ENCODE measurements at regions of chr6 and their contacts with region 1.

Region 1: DNA sequence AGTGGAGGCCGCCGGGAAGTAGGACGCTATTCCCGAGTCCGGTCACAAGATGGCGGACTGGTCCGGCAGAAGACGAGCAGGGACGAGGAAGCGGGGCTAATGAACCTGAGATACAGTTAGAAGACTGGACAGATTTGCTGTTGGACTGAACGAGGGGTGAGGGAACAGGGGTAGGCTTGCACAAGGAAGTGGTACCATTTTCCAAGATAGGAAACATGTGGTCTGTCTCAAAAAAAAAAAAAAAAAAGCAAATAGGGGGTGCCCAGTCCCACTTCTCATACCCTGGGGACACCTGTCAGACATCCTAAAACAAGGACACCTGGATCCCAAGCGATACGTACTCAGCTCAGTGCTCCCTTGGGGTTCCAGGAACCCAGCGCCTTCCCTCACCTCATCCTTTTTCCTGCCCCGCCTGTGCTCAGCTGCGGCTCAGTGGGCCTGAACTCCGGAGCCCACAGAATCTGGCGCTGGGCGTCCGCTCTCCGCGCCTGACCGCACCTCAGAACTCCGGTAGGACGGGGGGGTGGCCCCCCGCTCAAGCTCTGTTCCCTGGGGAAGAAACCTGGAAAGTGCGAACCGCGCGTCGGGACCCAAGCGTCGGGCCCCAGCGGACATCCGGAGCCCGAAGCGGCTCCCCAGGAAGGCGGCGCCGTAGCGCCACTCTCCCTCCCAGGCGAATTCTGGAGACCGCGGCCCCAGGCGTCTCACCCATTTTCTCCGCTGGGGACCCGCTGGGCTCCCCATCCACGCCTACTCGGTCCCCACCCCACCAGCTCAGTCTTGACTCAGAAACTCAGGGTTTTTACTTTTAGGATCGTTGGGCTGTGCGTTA is at the start of gene LY6G5C:
- DNase-seq: peak; percentile 77 to 87 (median 83)
- H3K4me3 ChIP-seq: peak within 1 kb of the TSS; percentile 48
- H3K27ac ChIP-seq: peak within 1 kb of the TSS; percentile 71 to 73
- H3K4me1 ChIP-seq: peaks cover 3% of the 10 kb centered on the region
- H3K27me3 ChIP-seq: no peaks in the 10 kb centered on the region
- CTCF ChIP-seq: peak in 2 of 3 donors; percentile 72 to 79
- EP300 ChIP-seq: no peak
- POLR2A ChIP-seq: no peak
- total RNA-seq, gene LY6G5C: 1.2 to 2.3 (median 2.0) TPM in 6 of 7 donors, not detected in the other

Region 2: DNA sequence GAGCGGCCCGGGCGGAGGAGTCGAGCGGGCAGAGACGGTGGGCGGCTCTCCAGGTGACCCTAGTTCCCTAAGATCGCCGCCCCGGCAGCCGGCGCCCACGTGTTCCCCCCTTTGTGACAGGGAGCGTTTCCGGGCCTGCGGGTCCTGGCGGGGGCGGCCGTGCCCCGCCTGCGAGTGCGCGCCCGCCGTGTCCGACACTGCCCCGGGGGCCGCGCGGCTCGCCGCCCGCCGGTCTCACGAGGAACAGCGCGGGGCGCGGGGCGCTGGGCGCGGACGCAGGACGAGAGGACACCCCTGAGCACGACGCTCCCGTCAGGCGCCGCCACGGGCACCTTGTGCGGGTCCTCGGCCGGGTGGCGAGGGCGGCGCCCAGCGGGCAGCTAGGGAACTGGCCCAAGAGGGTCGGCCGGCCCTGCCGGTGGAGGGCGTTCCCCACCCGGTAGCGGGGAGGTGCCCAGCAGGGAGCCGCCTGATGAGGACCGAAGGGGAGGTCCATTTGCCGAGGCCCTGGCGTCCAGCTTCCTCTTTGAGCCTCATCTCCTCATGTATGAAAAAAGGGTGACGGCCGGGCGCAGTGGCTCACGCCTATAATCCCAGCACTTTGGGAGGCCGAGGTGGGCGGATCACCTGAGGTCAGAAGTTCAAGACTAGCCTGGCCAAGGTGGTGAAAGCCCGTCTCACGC is 114.7 kb after region 1 on chr6 and contains the start of gene VARS1:
- intact Hi-C with region 1: no loop called
- DNase-seq: peak; percentile 88 to 93 (median 91)
- H3K4me3 ChIP-seq: peak within 1 kb of the TSS; percentile 67
- H3K27ac ChIP-seq: peak within 1 kb of the TSS; percentile 93 to 96
- H3K4me1 ChIP-seq: peaks cover 6% of the 10 kb centered on the region
- H3K27me3 ChIP-seq: no peaks in the 10 kb centered on the region
- CTCF ChIP-seq: peak; percentile 77 to 99 (median 99)
- EP300 ChIP-seq: no peak
- POLR2A ChIP-seq: peak; percentile 70
- total RNA-seq, gene VARS1: 16.0 to 73.6 (median 44.1) TPM

Region 3: GRCh38 chr6:31862344-31863227 is 181.5 kb after region 1 on chr6 and contains the start of gene NEU1:
- intact Hi-C with region 1: loop called in 2 of 4 experiments (anchors 10 kb)
- DNase-seq: peak; percentile 98 to 100 (median 99)
- H3K4me3 ChIP-seq: peak within 1 kb of the TSS; percentile 53
- H3K27ac ChIP-seq: peak within 1 kb of the TSS; percentile 65 to 70
- H3K4me1 ChIP-seq: peaks cover 4% of the 10 kb centered on the region
- H3K27me3 ChIP-seq: no peaks in the 10 kb centered on the region
- CTCF ChIP-seq: no peak
- EP300 ChIP-seq: peak; percentile 59
- POLR2A ChIP-seq: peak; percentile 97
- total RNA-seq, gene NEU1: 23.7 to 35.7 (median 28.2) TPM

Region 4: DNA sequence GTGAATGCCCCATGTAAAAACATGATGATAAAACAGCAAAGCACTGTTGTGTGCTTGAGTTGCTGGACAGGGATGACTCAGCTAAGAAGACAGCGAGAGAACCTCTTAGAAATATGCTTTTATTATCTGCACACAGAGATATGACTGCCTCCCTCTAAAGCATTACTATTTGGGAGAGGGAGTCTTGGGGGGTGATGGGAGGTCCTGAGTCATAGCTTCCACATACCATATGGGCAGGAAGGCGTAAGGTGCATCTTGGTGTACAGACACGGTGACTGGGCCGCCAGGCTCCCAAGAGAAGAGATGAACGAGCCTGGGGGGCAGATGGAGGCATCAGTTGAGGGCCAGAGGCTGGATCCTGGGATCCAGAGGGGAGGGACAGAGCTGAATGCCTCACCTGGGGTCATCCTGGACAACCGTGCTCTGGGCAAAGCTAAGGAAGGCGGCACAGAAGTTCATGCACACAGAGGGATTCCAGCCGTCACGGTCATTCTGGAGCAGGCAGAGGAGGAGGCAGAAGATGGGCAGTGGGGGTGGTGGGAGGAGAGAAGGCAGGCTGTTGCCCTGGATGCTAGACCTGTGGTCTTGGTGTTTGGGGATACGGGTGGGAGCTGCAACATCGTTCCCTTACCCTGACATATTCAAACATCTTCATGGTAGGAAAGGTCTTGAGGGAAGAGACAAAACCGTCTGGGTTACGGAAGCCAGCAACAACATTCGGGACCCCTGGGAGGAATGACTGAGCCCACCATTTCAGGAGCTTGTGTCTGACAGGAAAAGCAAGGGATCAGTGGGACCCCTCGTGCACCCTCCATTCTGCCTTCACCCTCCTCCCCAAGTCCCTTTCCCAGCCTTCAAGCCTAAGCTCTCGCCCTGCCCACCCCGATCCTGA is 288.9 kb after region 1 on chr6:
- intact Hi-C with region 1: loop called in 1 of 4 experiments (anchors 10 kb)
- DNase-seq: no peak
- H3K4me3 ChIP-seq: no peak overlapping the region
- H3K27ac ChIP-seq: peak overlapping the region in 1 of 2 donors; percentile 97
- H3K4me1 ChIP-seq: peaks cover 4% of the 10 kb centered on the region
- H3K27me3 ChIP-seq: no peaks in the 10 kb centered on the region
- CTCF ChIP-seq: no peak
- EP300 ChIP-seq: no peak
- POLR2A ChIP-seq: no peak